OCI-LY7 (cell line): ENCODE measurements at regions of chr6 and their contacts with region 1.

Region 1: DNA sequence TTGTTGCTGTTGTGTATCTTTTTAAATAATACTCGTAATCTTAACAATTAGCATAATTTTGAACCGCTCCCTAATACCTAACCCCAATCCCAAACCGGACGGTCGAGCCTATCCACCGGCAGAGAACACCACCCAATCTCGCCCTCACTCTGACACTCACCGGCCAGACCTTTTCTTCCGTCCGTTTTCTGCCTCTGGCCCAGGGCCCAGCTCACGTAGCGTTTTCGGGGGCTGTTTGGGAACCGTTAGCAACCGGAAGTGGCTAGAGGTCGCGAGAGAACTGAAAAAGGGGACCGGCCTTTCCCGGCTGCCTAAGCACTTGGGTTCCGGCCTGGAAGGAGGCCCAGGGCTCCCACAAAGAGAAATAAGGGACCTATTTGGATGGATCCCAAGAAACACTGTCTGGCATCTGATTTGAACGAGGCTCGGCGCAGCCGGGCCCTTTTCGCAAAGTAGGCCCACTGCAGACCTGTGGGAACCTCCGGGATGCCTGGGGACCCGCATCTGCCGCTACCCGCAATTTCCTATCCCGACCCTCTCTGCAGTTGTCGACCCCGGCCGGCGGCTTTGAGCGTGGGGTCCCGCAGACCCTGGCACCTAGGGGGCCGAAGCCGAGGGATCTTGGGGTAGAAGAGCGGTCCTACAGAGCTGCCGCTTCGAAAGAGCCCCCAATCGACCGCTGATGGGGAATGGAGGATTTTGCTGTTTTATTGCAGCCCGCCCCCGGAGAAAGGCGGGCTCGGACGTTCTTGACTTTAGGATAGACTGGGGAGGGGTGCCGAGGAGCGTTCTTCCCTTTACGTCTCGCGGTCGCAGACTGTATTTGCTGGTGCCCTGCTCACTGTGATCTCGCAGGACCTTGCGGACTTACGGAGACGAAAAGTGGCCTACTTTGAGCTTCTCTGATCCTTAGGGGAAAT is 4.8 kb upstream of the ZKSCAN8 start:
- DNase-seq: peak; percentile 94
- H3K4me3 ChIP-seq: peak overlapping the region; percentile 94
- H3K27ac ChIP-seq: peak overlapping the region; percentile 91
- H3K4me1 ChIP-seq: peaks cover 60% of the 10 kb centered on the region
- CTCF ChIP-seq: no peak

Region 2: DNA sequence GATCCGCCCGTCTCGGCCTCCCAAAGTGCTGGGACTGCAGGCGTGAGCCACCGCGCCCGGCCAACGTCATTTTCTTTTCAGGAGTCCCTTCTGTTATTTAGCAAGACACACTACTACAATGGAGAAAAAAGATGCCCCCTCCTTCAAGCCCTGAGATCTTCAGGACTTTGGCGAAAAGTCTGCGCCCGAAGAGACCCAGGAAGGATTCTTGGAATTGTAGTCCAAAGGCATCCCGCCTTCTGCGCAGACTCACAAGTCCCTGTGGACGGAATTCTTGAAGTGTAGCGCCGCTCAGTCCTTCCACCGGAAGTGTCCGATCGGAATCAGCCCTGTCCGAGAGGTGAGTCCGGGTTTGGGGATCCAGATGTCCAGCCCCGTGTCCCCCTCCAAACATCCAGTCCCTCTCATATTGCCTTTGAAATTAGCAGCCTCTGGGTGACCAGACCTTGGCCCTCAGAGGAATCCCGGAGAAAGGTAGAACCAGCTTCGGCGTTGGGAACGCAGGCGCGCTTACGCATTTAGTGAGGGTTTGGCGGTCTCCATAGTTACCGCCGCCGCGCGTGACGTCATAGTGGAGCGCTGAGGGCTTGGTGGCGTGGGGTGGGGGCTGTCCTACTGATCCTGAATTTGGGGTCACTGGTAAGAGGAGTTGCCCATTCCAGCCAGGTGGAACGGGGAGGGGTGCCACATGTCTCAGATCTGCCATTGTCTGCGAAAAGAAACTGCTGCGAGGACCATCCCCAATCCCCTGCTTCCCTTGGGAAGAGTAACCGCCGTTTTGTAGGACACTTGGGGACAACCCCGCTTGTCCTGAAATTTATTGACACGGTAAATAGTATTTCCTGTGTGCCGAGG is 56.0 kb before region 1 on chr6:
- CTCF ChIA-PET with region 1: no interaction called
- POLR2A ChIA-PET with region 1: interaction called, 3 read pairs
- intact Hi-C with region 1: loop called (anchors 2 kb)
- DNase-seq: peak; percentile 95
- H3K4me3 ChIP-seq: peak overlapping the region; percentile 87
- H3K27ac ChIP-seq: peak overlapping the region; percentile 70
- H3K4me1 ChIP-seq: peaks cover 12% of the 10 kb centered on the region
- CTCF ChIP-seq: no peak

Region 3: DNA sequence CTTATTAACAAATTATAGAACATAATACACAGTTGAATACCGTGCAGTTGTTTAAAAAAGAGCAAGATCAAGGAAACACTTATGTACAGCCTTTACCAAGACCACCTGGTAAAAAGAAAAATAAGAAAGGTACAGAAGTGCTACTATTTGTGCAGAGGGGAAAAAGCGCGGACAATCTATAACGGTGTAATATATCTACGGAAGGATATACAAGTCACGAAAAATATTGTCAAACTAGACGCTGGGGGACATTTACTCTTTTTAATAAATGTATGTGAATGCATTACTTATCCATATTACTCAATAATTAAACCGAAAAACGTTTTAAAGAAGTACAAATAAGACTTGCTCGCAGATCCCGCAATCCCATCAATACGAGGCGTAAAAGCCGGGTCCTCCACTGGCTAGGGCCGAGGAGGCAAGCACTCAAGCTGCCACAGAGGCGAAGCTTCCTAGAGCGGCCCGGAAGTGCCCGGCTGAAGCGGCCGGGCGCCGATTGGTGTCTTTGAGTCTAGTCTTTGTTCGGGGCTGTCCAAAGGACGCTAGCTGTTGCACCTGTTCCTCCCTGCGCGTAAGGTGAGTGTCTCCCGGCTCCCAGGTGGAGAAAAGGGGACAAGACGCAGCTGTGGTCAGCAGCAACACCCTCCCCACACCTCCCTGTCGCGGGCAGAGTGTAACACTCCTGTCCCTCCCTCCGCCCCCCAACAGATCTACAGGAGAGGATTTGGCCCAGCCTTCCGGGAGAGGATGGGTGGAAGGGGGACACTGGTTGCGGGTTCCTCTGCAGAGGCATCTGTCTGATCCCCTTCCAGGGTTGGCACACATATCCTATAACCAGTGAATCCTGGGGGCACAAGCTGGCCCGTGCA is 12.5 kb before region 1 on chr6 and contains the start of gene ZSCAN16:
- CTCF ChIA-PET with region 1: no interaction called
- POLR2A ChIA-PET with region 1: interaction called, 64 read pairs
- intact Hi-C with region 1: loop called (anchors 1 kb)
- DNase-seq: peak; percentile 85
- H3K4me3 ChIP-seq: peak within 1 kb of the TSS; percentile 73
- H3K27ac ChIP-seq: peak within 1 kb of the TSS; percentile 48
- H3K4me1 ChIP-seq: peaks cover 36% of the 10 kb centered on the region
- CTCF ChIP-seq: no peak
- total RNA-seq, gene ZSCAN16: 8.6 and 10.8 TPM in 2 replicates

Region 4: GRCh38 chr6:28349892-28350737 is 213.3 kb after region 1 on chr6 and contains the start of gene ZKSCAN3:
- CTCF ChIA-PET with region 1: no interaction called
- POLR2A ChIA-PET with region 1: no interaction called
- intact Hi-C with region 1: loop called (anchors 1 kb)
- DNase-seq: peak; percentile 85
- H3K4me3 ChIP-seq: peak within 1 kb of the TSS; percentile 79
- H3K27ac ChIP-seq: peak within 1 kb of the TSS; percentile 31
- H3K4me1 ChIP-seq: peaks cover 8% of the 10 kb centered on the region
- CTCF ChIP-seq: no peak
- total RNA-seq, gene ZKSCAN3: 2.5 and 3.2 TPM in 2 replicates

Region 5: GRCh38 chr6:28489366-28490204 is 352.7 kb after region 1 on chr6:
- CTCF ChIA-PET with region 1: no interaction called
- POLR2A ChIA-PET with region 1: no interaction called
- intact Hi-C with region 1: no loop called
- DNase-seq: no peak
- H3K4me3 ChIP-seq: no peak overlapping the region
- H3K27ac ChIP-seq: no peak overlapping the region
- H3K4me1 ChIP-seq: no peaks in the 10 kb centered on the region
- CTCF ChIP-seq: no peak

Region 6: DNA sequence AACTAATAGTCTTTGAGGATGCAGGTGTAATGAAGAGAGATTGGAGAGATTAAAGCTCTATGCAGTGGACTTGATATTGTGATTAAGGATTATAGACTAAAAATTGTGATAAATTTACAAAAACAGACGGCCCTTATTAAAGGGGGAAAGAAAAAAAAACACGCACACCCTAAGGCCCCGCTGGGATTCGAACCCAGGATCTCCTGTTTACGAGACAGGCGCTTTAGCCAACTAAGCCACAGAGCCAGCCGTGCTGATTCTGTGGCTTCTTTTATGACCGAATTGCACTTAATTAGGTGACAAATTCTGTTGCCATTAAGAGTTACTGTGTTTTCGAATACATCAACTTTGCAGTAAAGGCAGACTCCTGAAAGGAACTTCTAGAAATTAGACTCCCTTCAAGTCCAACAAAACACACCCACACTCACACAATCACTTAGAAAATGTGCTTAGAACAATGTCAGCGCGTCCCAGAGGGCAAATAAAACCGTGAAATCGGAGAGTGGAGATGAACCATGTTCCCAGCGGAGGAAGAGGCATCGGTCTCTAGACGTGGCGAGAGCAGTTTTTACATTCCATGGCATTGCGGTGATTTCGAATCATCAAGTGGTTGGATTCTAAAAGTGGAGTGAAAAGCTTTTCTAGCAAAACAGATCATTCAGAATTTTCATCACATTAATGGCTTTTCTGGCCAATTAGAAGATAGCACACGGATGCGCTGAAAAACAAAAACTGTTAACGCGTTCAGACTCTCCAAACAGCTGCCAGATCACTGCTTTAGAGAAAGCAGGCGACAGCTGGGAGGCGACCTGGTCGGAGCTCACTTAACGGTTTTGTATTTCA is 511.4 kb after region 1 on chr6:
- CTCF ChIA-PET with region 1: no interaction called
- POLR2A ChIA-PET with region 1: no interaction called
- intact Hi-C with region 1: loop called (anchors 2 kb)
- DNase-seq: peak; percentile 89
- H3K4me3 ChIP-seq: peak overlapping the region; percentile 96
- H3K27ac ChIP-seq: peak overlapping the region; percentile 85
- H3K4me1 ChIP-seq: peaks cover 9% of the 10 kb centered on the region
- CTCF ChIP-seq: no peak

Region 7: GRCh38 chr6:30066577-30067459 is 1930.0 kb after region 1 on chr6 and contains the start of gene PPP1R11:
- CTCF ChIA-PET with region 1: no interaction called
- POLR2A ChIA-PET with region 1: no interaction called
- intact Hi-C with region 1: loop called (anchors 10 kb)
- DNase-seq: peak; percentile 99
- H3K4me3 ChIP-seq: peak within 1 kb of the TSS; percentile 77
- H3K27ac ChIP-seq: peak within 1 kb of the TSS; percentile 83
- H3K4me1 ChIP-seq: peaks cover 35% of the 10 kb centered on the region
- CTCF ChIP-seq: no peak
- total RNA-seq, gene PPP1R11: 30.6 and 35.6 TPM in 2 replicates